Sigmoid colon (tissue), 7 donors: ENCODE measurements at regions of chr12 and their contacts with region 1.

Region 1: GRCh38 chr12:47102845-47103651 is 23.3 kb upstream of the AMIGO2 start:
- DNase-seq: peak; percentile 87
- H3K4me3 ChIP-seq: no peak overlapping the region
- H3K27ac ChIP-seq: peak overlapping the region; percentile 30 to 84 (median 80)
- H3K4me1 ChIP-seq: peaks cover 0 to 46% (median 33%) of the 10 kb centered on the region in 4 donors
- H3K27me3 ChIP-seq: no peaks in the 10 kb centered on the region
- CTCF ChIP-seq: no peak
- EP300 ChIP-seq: peak; percentile 82 to 93 (median 90)
- POLR2A ChIP-seq: no peak

Region 2: DNA sequence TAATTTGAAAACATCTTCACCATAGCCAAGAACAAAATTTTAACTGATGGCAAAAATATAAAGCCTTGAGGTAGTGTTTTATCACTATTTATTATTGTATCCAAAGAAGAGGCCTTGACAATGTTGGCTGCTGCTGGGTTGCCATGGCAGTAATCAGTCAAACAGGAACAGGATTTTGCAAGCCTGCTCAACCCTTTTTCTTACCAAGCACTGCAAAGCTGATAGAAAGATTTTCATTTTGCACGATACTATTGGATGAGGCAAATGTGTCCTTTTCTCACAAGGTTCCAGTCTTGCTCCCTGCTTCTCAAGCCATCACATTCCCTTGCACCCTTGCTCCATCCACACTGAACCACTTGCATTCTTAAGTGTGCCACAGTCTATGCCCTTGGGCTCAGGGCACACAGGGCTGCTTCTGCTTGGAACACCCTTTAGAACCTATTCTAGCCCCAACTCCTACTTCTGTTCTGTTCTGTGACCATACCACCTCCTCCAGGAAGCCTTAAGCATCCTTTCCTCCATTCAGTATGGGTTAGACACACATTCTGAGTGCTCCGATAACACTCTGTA is 53.2 kb after region 1 on chr12:
- intact Hi-C with region 1: loop called (anchors 5 kb)
- DNase-seq: no peak
- H3K4me3 ChIP-seq: no peak overlapping the region
- H3K27ac ChIP-seq: peak overlapping the region in 3 of 4 donors; percentile 10 to 67 (median 59)
- H3K4me1 ChIP-seq: peaks cover 0 to 19% (median 10%) of the 10 kb centered on the region in 4 donors
- H3K27me3 ChIP-seq: no peaks in the 10 kb centered on the region
- CTCF ChIP-seq: no peak
- EP300 ChIP-seq: no peak
- POLR2A ChIP-seq: no peak

Region 3: DNA sequence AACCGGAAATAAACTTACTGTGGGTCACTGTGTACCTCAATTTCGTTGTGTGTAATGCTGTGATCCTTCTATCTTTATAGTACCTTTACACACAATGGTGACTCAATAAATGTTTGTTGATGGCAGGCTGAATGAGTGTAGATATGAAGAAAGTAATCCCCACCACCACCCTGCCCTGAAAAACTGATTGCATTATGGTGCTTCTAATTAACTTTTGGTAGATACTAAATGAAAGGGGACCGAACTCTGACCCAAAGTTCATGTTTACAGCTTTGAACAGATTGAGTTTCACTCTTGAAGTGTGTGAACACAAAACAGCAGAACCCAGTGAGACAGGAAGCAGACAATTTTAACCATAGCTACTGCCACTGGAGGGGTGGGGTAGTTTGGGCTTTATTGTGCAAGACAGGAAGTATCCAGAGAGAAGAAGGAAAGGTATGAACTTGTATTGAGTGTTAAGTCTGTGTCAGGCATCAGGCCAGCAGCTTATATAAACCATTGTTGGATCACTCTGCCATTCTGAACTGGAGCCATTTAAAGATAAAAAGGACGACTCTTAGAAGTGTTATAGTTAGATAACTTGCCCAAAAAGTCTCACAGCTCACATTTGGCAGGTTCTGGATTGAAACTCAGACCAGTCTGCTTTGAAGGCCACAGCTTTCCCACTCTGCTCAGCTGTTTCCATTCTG is 173.7 kb after region 1 on chr12:
- intact Hi-C with region 1: loop called (anchors 10 kb)
- DNase-seq: peak; percentile 79
- H3K4me3 ChIP-seq: no peak overlapping the region
- H3K27ac ChIP-seq: peak overlapping the region; percentile 29 to 73 (median 68)
- H3K4me1 ChIP-seq: peaks cover 0 to 43% (median 33%) of the 10 kb centered on the region in 4 donors
- H3K27me3 ChIP-seq: no peaks in the 10 kb centered on the region
- CTCF ChIP-seq: no peak
- EP300 ChIP-seq: no peak
- POLR2A ChIP-seq: no peak

Region 4: DNA sequence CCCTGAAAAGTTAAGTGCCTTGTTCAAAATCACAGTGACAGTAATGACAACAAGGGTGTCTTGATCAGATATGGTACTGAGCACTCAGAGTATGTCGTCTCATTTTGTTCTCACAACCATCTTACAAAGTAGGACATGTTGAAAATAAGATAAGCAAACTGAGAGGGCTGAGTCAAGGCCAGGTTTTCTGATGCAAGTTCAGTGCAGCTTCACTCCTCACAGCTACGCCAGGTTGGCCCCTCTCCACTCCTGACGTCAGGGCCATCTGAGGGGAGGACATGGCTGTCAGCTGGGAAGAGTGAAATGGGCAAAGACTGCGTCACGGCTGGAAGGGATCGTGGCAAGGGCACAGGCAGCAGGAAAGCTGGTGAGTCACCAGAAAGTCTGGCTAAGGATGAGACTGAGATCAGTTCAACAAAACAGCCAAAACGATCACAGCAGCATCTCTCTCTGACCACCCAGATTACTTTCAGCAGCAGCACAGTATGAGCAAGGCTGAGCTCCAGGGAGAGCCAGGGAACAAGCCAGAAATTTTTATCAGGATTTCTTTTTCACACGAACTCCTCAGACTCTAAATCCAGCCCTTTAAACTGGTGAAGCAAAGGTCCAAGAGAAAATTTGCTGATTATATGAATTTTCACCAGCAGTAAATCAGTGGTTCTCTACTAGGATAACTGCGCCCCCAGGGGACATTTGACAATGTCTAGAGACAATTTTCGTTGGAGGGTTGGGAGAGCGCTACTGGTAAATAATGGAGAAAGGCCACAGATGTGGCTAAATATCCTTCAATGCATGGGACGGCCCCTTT is 274.6 kb after region 1 on chr12:
- intact Hi-C with region 1: loop called (anchors 5 kb)
- DNase-seq: peak; percentile 99
- H3K4me3 ChIP-seq: peak overlapping the region in 1 of 4 donors; percentile 1
- H3K27ac ChIP-seq: peak overlapping the region; percentile 70 to 89 (median 76)
- H3K4me1 ChIP-seq: peaks cover 0 to 27% (median 16%) of the 10 kb centered on the region in 4 donors
- H3K27me3 ChIP-seq: no peaks in the 10 kb centered on the region
- CTCF ChIP-seq: no peak
- EP300 ChIP-seq: peak; percentile 94 to 98 (median 98)
- POLR2A ChIP-seq: no peak

Region 5: GRCh38 chr12:47551426-47551851 is 448.4 kb after region 1 on chr12:
- intact Hi-C with region 1: loop called (anchors 5 kb)
- DNase-seq: no peak
- H3K4me3 ChIP-seq: no peak overlapping the region
- H3K27ac ChIP-seq: peak overlapping the region in 3 of 4 donors; percentile 77 to 86 (median 84)
- H3K4me1 ChIP-seq: peaks cover 0 to 55% (median 39%) of the 10 kb centered on the region in 4 donors
- H3K27me3 ChIP-seq: no peaks in the 10 kb centered on the region
- CTCF ChIP-seq: no peak
- EP300 ChIP-seq: peak; percentile 36 to 93 (median 82)
- POLR2A ChIP-seq: no peak